CD8-positive, alpha-beta memory T cell (primary cell): ENCODE measurements at regions of chr12 and their contacts with region 1.

Region 1: GRCh38 chr12:113174461-113175384 is 10.6 kb downstream of the DDX54 start:
- DNase-seq: peak; percentile 56 to 81 (median 68)
- H3K4me3 ChIP-seq: no peak overlapping the region
- H3K4me3 Mint-ChIP-seq: no peak overlapping the region
- H3K27ac ChIP-seq: no peak overlapping the region
- H3K27ac Mint-ChIP-seq: peak overlapping the region in 4 of 8 donors; percentile 6 to 84 (median 66)
- H3K4me1 ChIP-seq: no peaks in the 10 kb centered on the region
- H3K4me1 Mint-ChIP-seq: peaks cover 4 to 6% (median 5%) of the 10 kb centered on the region in 3 donors
- H3K27me3 ChIP-seq: no peaks in the 10 kb centered on the region
- H3K27me3 Mint-ChIP-seq: no peaks in the 10 kb centered on the region

Region 2: DNA sequence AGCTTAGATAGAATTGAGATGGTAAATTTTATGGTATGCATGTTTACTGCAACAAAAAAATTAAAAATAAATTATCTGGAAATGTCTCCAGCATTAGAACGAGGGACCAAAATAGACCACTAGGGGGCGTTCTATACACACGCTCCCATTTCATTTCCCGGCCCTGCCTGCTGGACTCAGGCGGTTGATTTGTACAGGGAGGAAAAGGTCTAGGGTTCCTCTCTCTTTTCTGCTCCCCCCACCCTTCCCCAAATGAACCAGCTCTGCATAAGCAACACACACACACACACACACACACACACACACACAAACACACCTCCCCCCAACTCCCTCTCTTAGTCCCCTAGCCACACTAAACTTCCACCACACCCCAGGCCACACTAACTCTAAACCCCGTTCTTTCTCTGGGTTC is 126.0 kb before region 1 on chr12:
- CTCF ChIA-PET with region 1: interaction called, 26 read pairs
- POLR2A ChIA-PET with region 1: no interaction called
- DNase-seq: peak; percentile 39 to 73 (median 56)
- H3K4me3 ChIP-seq: no peak overlapping the region
- H3K4me3 Mint-ChIP-seq: no peak overlapping the region
- H3K27ac ChIP-seq: no peak overlapping the region
- H3K27ac Mint-ChIP-seq: no peak overlapping the region
- H3K4me1 ChIP-seq: peaks cover 8% of the 10 kb centered on the region
- H3K4me1 Mint-ChIP-seq: peaks cover 0 to 8% (median 2%) of the 10 kb centered on the region in 3 donors
- H3K27me3 ChIP-seq: no peaks in the 10 kb centered on the region
- H3K27me3 Mint-ChIP-seq: peaks cover 6% of the 10 kb centered on the region in 2 donors

Region 3: GRCh38 chr12:113152835-113153814 is 21.6 kb before region 1 on chr12:
- CTCF ChIA-PET with region 1: interaction called, 25 read pairs
- POLR2A ChIA-PET with region 1: no interaction called
- DNase-seq: peak; percentile 34 to 77 (median 60)
- H3K4me3 ChIP-seq: peak overlapping the region; percentile 56
- H3K4me3 Mint-ChIP-seq: peak overlapping the region; percentile 76 to 89 (median 80)
- H3K27ac ChIP-seq: no peak overlapping the region
- H3K27ac Mint-ChIP-seq: peak overlapping the region in 2 of 8 donors; percentile 1 to 72
- H3K4me1 ChIP-seq: peaks cover 22% of the 10 kb centered on the region
- H3K4me1 Mint-ChIP-seq: peaks cover 16 to 34% (median 26%) of the 10 kb centered on the region in 3 donors
- H3K27me3 ChIP-seq: peaks cover 5% of the 10 kb centered on the region
- H3K27me3 Mint-ChIP-seq: peaks cover 15 to 19% of the 10 kb centered on the region in 2 donors

Region 4: DNA sequence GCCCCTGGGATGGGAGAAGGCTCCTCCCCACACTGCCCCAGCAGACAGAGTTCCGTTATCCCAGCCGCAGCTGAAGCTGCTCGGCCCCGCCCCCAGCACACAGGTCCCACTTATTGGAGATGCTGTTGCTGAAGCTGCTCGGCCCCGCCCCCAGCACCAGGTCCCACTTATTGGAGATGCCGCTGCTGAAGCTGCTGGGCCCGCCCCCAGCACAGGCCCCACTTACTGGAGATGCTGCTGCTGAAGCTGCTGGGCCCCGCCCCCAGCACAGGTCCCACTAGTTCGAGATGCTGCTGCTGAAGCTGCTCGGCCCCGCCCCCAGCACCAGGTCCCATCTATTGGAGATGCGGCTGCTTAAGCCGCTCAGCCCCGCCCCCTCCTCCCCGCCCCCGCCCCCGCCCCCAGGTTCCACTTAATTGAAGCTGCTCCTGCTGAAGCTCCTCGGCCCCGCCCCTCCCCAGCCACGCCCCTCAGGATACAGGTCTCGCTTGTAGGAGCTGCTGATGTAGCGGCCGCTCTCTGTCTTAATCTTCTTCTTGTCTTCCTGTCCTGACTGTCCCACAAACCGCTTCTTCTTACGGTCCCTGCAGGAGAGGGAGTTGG is 13.2 kb before region 1 on chr12:
- CTCF ChIA-PET with region 1: interaction called, 17 read pairs
- POLR2A ChIA-PET with region 1: no interaction called
- DNase-seq: no peak
- H3K4me3 ChIP-seq: no peak overlapping the region
- H3K4me3 Mint-ChIP-seq: no peak overlapping the region
- H3K27ac ChIP-seq: no peak overlapping the region
- H3K27ac Mint-ChIP-seq: no peak overlapping the region
- H3K4me1 ChIP-seq: no peaks in the 10 kb centered on the region
- H3K4me1 Mint-ChIP-seq: peaks cover 1 to 7% (median 3%) of the 10 kb centered on the region in 3 donors
- H3K27me3 ChIP-seq: no peaks in the 10 kb centered on the region
- H3K27me3 Mint-ChIP-seq: no peaks in the 10 kb centered on the region

Region 5: GRCh38 chr12:113184900-113185773 is 10.4 kb after region 1 on chr12 and contains the starts of genes DDX54 and RITA1:
- CTCF ChIA-PET with region 1: interaction called, 27 read pairs
- POLR2A ChIA-PET with region 1: no interaction called
- DNase-seq: peak; percentile 82 to 92 (median 89)
- H3K4me3 ChIP-seq: peak within 1 kb of the TSS; percentile 85
- H3K4me3 Mint-ChIP-seq: peak within 1 kb of the TSS; percentile 94 to 100 (median 96)
- H3K27ac ChIP-seq: peak within 1 kb of the TSS; percentile 89
- H3K27ac Mint-ChIP-seq: peak within 1 kb of the TSS; percentile 96 to 99 (median 97)
- H3K4me1 ChIP-seq: peaks cover 31% of the 10 kb centered on the region
- H3K4me1 Mint-ChIP-seq: peaks cover 28 to 51% (median 49%) of the 10 kb centered on the region in 3 donors
- H3K27me3 ChIP-seq: no peaks in the 10 kb centered on the region
- H3K27me3 Mint-ChIP-seq: no peaks in the 10 kb centered on the region
- total RNA-seq, gene DDX54: 131 to 133 TPM
- total RNA-seq, gene RITA1: 21.1 to 22.5 TPM